PC-9 (cell line): ENCODE measurements at regions of chr3 and their contacts with region 1.

Region 1: DNA sequence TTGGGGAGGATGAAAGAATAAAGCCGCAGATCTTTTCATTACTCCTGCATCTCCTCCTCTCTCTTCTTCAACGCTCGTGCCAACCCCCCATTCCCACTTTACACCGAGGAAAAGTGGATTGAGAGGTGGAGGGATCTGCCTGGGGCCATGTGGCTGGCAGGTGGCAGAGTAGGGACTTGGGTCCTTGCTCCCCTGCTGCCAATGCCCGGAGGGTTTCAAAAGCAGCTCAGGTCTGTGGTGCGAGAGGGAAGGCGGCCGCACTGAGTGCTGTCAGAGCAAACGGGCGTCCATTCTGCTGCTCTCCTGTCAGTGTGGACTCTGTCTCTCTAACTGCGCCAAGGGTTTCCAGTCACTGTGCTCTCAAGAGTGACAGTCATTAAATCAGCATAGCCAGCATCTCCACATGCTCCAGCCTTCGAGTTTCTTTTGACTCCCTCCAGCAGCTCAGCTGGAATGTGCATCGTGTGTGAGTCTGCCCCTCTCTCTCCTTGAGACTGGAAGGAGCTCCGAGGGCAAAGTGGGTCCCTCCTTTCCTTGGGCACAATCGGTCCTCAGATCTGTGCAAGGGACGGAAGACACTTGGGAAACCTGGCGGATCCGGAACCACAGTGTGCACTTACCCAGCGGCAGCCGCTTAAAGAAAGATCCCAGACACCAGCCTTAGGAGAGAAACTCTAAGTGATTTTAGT is 68.6 kb downstream of the VGLL4 start:
- DNase-seq: no peak
- H3K4me3 ChIP-seq: no peak overlapping the region
- H3K27ac ChIP-seq: no peak overlapping the region
- H3K4me1 ChIP-seq: peaks cover 5% of the 10 kb centered on the region; the same call in 1 of the 2 replicates
- H3K27me3 ChIP-seq: no peaks in the 10 kb centered on the region
- CTCF ChIP-seq: no peak

Region 2: GRCh38 chr3:11624161-11624560 is 49.0 kb after region 1 on chr3:
- CTCF ChIA-PET with region 1: no interaction called
- POLR2A ChIA-PET with region 1: interaction called, 10 read pairs
- intact Hi-C with region 1: no loop called
- DNase-seq: no peak
- H3K4me3 ChIP-seq: no peak overlapping the region
- H3K27ac ChIP-seq: no peak overlapping the region
- H3K4me1 ChIP-seq: no peaks in the 10 kb centered on the region; the same call in 1 of the 2 replicates
- H3K27me3 ChIP-seq: no peaks in the 10 kb centered on the region
- CTCF ChIP-seq: no peak

Region 3: DNA sequence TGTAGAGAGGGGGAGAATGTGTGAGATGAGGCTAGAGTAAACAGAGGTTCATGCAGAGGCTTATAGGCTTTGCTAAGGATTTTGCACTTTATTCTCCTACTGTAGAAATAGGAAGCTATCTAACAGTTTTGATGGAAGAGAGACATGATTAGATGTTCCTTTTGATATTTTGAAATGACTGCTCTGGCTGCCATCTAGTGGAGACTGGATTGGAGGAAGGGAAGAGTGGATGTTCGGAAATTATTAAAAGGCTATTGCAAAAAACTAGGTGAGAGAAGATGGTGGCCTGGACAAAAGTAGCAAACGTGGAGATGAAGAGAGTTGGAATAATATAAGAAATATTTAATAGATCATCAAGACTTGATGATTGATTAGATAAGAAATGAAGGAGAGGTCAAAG is 471.3 kb after region 1 on chr3:
- CTCF ChIA-PET with region 1: no interaction called
- POLR2A ChIA-PET with region 1: no interaction called
- intact Hi-C with region 1: no loop called
- DNase-seq: no peak
- H3K4me3 ChIP-seq: no peak overlapping the region
- H3K27ac ChIP-seq: no peak overlapping the region
- H3K4me1 ChIP-seq: no peaks in the 10 kb centered on the region
- H3K27me3 ChIP-seq: peaks cover 75% of the 10 kb centered on the region
- CTCF ChIP-seq: 0 out of 2 replicates have a peak, but pooled peaks have one; percentile 41